Heart right ventricle (tissue), 16 donors: ENCODE measurements at regions of chr2 and their contacts with region 1.

Region 1: DNA sequence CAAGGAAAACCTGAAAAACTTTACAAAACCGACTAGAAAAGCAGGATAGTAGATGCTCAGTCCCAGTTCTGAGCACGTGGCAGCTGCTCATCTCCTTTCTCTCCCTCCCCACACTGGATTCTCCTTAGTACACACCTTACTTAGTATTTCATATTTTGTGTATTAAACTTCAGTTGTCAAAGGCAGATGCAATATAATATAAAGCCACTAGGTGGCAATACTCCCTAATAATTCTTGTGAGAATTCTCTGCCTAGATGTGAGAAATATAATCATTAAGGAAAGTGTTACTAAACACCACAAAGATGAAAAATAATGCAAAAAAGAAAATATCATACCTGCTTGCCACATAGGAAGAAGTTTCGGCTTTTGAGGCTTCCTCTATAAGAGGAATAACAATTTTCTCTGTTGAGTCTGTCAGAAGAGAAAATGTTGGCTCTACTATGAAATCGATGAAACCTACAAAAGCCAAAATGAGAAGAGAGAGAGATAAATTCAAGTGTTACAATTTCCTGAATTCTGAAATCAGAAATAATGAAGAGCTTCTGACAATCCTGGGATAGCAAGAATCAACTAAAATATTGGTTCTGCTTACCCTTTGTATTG is 200.6 kb downstream of the PPP1R1C start:
- DNase-seq: no peak
- ATAC-seq: peak; percentile 22 to 72 (median 51)
- H3K4me3 ChIP-seq: no peak overlapping the region
- H3K27ac ChIP-seq: peak overlapping the region in 3 of 10 donors; percentile 3 to 45 (median 27)
- H3K4me1 ChIP-seq: peaks cover 0 to 10% (median 5%) of the 10 kb centered on the region in 9 donors
- H3K27me3 ChIP-seq: no peaks in the 10 kb centered on the region
- CTCF ChIP-seq: peak; percentile 68 to 90 (median 81)

Region 2: GRCh38 chr2:182207049-182207746 is 21.0 kb after region 1 on chr2:
- intact Hi-C with region 1: no loop called
- DNase-seq: no peak
- ATAC-seq: no peak
- H3K4me3 ChIP-seq: no peak overlapping the region
- H3K27ac ChIP-seq: no peak overlapping the region
- H3K4me1 ChIP-seq: no peaks in the 10 kb centered on the region
- H3K27me3 ChIP-seq: no peaks in the 10 kb centered on the region
- CTCF ChIP-seq: no peak

Region 3: GRCh38 chr2:182229297-182229696 is 43.1 kb after region 1 on chr2:
- intact Hi-C with region 1: no loop called
- DNase-seq: no peak
- ATAC-seq: no peak
- H3K4me3 ChIP-seq: no peak overlapping the region
- H3K27ac ChIP-seq: peak overlapping the region in 3 of 10 donors; percentile 68 to 75 (median 71)
- H3K4me1 ChIP-seq: peaks cover 0 to 34% (median 3%) of the 10 kb centered on the region in 9 donors
- H3K27me3 ChIP-seq: no peaks in the 10 kb centered on the region
- CTCF ChIP-seq: no peak

Region 4: GRCh38 chr2:182240862-182241371 is 54.7 kb after region 1 on chr2:
- intact Hi-C with region 1: no loop called
- DNase-seq: no peak
- ATAC-seq: peak; percentile 43 to 75 (median 66)
- H3K4me3 ChIP-seq: no peak overlapping the region
- H3K27ac ChIP-seq: peak overlapping the region in 2 of 10 donors; percentile 49 to 50
- H3K4me1 ChIP-seq: peaks cover 0 to 22% (median 9%) of the 10 kb centered on the region in 9 donors
- H3K27me3 ChIP-seq: no peaks in the 10 kb centered on the region
- CTCF ChIP-seq: peak in 6 of 9 donors; percentile 32 to 53 (median 48)

Region 5: DNA sequence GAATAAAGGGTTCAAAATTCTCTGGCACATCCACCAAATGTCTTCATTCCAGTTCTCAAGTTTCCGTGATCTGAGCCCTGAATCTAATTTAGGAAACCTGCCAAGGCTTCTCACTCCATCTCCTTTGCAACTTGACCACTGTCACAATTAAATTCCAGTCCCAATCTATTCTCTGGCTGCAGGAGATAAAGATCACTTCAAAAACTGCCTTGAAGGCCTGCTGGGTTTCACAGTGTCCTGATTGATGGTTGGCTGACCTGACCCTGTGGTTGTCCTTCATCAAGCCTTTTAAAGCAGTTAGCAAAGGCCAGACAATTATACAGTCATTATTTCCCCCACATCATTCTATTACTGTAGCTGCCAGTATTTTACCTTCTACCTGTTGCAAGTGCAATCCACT is 469.5 kb after region 1 on chr2:
- intact Hi-C with region 1: loop called in 8 of 10 experiments (anchors 1 to 5 kb)
- DNase-seq: no peak
- ATAC-seq: no peak
- H3K4me3 ChIP-seq: no peak overlapping the region
- H3K27ac ChIP-seq: no peak overlapping the region
- H3K4me1 ChIP-seq: peaks cover 0 to 4% (median 0%) of the 10 kb centered on the region in 9 donors
- H3K27me3 ChIP-seq: peaks cover 0 to 4% (median 0%) of the 10 kb centered on the region in 7 donors
- CTCF ChIP-seq: no peak

Region 6: GRCh38 chr2:183162362-183162761 is 976.1 kb after region 1 on chr2:
- intact Hi-C with region 1: no loop called
- DNase-seq: no peak
- ATAC-seq: no peak
- H3K4me3 ChIP-seq: no peak overlapping the region
- H3K27ac ChIP-seq: no peak overlapping the region
- H3K4me1 ChIP-seq: no peaks in the 10 kb centered on the region
- H3K27me3 ChIP-seq: no peaks in the 10 kb centered on the region
- CTCF ChIP-seq: no peak